Mammary epithelial cell (primary cell): ENCODE measurements at regions of chr21 and their contacts with region 1.

Region 1: DNA sequence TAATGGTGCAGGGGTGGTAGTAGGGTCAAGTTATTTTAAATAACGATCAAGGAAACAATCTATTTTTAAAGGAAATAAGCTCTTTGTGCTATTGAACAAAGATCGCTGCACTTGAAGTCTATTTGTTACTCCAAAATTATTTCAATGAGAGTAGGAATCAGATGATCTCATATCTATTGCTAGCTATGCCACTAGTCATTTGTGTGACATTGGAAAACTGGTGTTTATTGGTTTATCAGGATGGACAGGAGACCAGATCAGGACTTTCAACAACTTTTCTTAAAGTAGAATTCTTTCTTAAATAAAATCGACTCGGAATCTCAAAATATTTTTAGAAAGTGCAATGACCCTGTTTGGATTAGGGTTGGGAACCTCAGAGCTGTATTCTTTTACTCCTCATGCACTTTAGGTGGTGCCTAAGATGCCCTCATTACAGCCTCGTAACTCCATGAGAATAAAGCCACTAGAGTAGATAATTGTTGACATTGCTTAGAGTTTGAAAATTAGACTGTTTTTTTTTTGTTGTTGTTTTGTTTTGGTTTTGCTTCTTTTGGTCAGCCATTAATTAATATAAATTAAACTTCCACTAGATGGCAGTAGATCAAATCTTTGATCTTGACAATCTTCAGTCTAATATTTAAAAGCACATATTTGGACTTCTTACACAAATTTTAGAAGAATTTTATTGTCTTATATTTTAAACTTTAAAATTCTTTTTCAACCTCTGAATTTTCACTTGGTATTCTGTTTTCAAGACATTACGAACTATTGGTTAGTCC is 352.4 kb downstream of the USP25 start:
- DNase-seq: no peak
- H3K4me3 ChIP-seq: no peak overlapping the region
- H3K27ac ChIP-seq: no peak overlapping the region
- H3K4me1 ChIP-seq: no peaks in the 10 kb centered on the region
- H3K27me3 ChIP-seq: no peaks in the 10 kb centered on the region
- CTCF ChIP-seq: peak; percentile 13 to 33

Region 2: DNA sequence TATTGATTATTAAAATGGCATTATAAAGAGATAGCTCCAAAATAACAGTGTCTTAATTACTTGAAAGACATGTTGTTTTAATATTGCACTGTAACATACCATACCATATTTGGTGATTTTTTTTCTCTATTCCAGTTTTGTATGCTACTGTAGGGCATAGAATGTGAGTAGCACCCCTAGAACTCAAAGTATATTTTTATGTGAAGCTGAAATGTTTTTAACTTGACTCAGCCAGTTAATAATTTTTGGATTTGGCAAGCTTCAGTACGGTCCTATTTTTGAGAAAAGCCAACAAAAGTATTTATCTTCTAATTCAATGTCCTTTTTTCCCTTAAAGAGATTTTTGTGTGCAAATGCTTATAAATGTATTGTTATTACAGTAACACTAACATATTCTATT is 241.4 kb after region 1 on chr21:
- CTCF ChIA-PET with region 1: no interaction called
- dilution Hi-C with region 1: no loop called
- in situ Hi-C with region 1: loop called (anchors 10 kb)
- intact Hi-C with region 1: no loop called
- DNase-seq: no peak
- H3K4me3 ChIP-seq: no peak overlapping the region
- H3K27ac ChIP-seq: no peak overlapping the region
- H3K4me1 ChIP-seq: no peaks in the 10 kb centered on the region
- H3K27me3 ChIP-seq: no peaks in the 10 kb centered on the region
- CTCF ChIP-seq: no peak